GM10248 (cell line): ENCODE measurements at regions of chr3 and their contacts with region 1.

Region 1: DNA sequence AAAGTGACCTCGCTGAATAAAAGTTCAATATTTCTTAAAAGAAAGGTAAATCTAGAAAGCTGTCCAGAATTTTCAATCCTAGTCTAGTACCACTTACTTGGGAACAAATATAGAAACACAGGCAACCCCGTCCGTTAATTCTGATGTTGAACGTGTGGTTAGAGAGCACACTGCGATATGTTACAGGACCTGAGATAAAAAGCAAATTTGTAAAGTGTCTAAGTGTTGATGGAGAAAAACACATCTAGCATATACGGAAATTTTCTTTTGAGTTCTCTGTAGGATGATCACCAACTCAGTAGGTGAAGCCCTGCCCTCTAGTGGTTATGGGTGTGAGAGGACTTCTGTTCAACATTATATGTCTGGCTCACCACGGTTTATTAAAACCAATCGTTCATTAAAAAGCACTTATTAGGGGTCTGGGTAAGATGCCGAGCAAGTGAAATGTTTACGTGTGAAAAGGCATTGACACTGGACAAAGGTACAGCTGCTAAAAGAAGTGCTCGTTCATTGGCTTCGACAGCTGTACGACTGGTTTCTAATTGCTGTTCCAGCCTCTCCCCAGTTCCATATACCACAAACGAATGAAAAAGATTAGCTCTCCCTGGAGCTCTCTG is 1.0 kb upstream of the ATP2C1 start:
- DNase-seq: peak; percentile 64
- CTCF ChIP-seq: peak; percentile 75

Region 2: GRCh38 chr3:130850044-130850797 is 42.6 kb before region 1 on chr3:
- CTCF ChIA-PET with region 1: interaction called, 39 read pairs
- POLR2A ChIA-PET with region 1: interaction called, 11 read pairs
- DNase-seq: peak; percentile 42
- CTCF ChIP-seq: no peak

Region 3: GRCh38 chr3:130870423-130870822 is 22.4 kb before region 1 on chr3:
- CTCF ChIA-PET with region 1: interaction called, 13 read pairs
- POLR2A ChIA-PET with region 1: no interaction called
- DNase-seq: no peak
- CTCF ChIP-seq: no peak

Region 4: DNA sequence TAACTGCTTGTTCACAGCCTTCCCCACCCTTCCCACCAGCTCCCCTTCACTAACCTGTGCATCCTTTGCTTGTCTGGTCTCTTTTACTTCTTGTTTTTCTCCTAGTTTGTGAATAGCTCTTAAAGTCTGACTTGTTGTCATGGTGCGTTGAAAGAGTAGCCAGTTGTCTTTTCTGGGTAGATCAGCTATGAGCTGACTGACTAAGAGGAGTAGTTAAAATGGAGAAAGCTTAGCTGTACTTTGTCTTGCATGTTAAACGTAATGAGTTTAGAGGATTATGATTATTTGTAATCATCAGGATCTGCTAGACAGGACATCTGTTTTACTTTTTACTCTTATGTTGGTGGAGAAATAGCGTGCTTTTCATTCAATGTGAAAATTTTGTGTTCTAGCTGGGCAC is 36.9 kb after region 1 on chr3:
- CTCF ChIA-PET with region 1: interaction called, 18 read pairs
- POLR2A ChIA-PET with region 1: no interaction called
- DNase-seq: no peak
- CTCF ChIP-seq: no peak